HEK293T (cell line): ENCODE measurements at regions of chr6 and their contacts with region 1.

Region 1: DNA sequence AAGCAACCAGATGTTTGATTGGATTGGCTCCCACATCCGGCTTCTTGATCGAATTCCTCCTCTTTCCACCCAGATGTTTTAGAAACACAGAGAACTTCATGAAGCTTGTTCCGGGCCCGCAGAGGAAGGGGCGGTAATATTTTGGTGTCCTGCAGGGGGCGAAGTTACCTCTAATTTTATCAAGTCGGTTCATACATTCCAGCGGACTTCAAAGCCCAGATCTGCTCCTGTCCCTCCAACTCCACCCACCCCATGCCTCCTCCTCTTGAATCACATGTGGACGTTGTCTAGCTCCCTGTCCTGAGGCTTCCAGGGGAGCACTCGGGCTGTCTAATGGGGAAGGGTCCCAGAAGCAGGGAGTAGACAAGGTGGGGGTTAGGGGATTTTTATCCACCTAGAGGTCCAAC is 2.9 kb upstream of the BMP6 start:
- DNase-seq: peak; percentile 62

Region 2: GRCh38 chr6:7701212-7701834 is 21.7 kb before region 1 on chr6:
- CTCF ChIA-PET with region 1: interaction called, 15 read pairs
- POLR2A ChIA-PET with region 1: no interaction called
- DNase-seq: no peak